Head of caudate nucleus (tissue), 42 donors: ENCODE measurements at regions of chr5 and their contacts with region 1.

Region 1: DNA sequence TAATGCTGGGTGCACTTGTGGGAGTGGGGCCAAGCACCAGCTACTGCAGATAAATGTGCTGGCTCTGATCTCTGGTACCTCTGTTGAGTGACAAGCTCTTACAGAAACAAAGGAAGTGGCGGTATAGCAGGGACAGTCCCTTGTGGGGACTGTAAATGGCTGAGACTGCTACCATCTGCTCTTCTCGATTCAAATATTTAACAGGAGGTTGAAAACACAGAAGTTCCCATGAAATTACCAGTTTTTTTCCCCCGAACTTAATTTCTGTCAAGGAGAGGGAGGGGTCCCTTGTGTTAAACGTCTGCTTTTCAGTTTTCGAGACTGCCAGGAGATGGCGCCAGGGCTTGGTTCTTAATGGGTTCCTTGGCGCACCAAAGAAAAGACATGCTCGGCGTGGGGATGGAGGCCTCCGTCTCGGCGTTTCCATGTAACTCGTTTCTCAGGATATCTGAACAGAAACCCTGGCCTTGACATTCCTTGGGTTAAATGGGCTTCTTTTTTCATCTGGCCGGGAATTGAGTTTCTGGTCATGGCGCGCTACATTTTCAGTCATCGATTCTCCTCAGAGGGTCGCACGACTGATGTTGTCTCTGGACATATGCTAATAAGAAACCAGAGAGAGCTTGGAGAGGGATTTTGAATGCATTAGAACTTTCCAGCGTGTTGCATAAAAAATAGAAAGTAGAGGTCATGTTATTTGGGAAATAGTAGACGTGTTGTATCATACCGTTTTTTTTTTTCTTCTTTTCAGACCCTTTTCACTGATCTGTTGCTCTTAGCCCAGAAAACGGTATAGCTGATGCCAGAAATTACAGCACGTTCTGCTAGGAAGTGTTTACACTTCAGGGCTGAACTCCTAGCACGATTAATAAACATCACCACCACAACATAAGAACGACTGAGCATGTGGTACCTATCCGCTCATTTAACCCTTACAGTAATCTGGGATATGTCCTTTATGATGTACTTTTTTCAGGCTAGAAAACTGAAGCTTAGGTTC is 64.0 kb downstream of the CARTPT start:
- DNase-seq: peak; percentile 79 to 95 (median 90)

Region 2: GRCh38 chr5:72108202-72109061 is 325.4 kb after region 1 on chr5:
- intact Hi-C with region 1: loop called (anchors 5 kb)
- DNase-seq: peak; percentile 66 to 90 (median 81)

Region 3: GRCh38 chr5:72307968-72308852 is 525.1 kb after region 1 on chr5:
- intact Hi-C with region 1: loop called (anchors 5 kb)
- DNase-seq: peak; percentile 95 to 99 (median 98)